Activated naive CD4-positive, alpha-beta T cell treated with anti-CD3 and anti-CD28 coated beads for 36 hours (primary cell): ENCODE measurements at regions of chr7 and their contacts with region 1.

Region 1: DNA sequence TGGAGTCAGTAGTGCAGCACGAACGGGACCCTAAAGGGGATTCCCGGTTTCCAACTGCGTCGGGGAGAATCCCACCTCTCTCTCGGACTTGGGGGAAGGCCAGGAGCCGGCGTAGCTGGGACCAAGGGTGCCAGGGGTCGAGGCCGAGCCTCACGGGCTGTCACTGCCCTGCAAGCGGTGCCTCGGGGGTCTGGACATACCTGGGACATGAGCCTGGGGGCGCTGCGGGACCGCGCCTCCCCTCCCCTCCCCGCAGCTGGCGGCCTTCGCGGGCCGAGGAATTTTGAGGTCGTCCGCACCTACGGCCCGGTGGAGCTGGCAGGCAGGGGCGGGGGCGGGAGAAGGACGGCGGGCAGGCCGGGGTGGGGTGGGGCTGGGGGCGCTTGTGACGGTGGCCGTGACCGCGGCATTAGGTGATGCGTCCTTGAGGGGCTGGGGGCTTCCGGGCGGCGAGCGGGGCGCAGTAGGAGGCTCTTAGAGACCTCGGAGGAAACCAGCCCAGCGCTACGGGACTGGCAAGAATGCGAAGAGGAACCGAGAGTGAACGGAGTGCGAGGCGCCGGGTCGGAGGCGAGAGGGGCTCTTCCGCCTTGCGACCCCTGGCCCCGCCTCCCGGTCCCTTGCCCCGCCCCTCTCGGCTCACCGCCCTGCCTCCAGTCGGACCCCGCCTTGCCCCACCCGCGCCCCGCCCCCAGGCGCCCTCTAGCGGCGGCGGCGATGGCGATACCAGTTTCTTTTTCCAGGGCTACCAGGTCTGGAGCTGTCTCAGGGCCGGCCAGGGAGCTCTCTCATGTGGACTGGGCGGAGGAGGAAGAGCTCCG is 48.3 kb downstream of the NPVF start:
- DNase-seq: peak; percentile 94
- H3K4me3 Mint-ChIP-seq: peak overlapping the region; percentile 83
- H3K27ac Mint-ChIP-seq: peak overlapping the region; percentile 81
- H3K4me1 Mint-ChIP-seq: peaks cover 19% of the 10 kb centered on the region
- H3K27me3 Mint-ChIP-seq: no peaks in the 10 kb centered on the region

Region 2: GRCh38 chr7:25148772-25149575 is 31.0 kb before region 1 on chr7:
- CTCF ChIA-PET with region 1: no interaction called
- intact Hi-C with region 1: loop called (anchors 2 kb)
- DNase-seq: no peak
- H3K4me3 Mint-ChIP-seq: no peak overlapping the region
- H3K27ac Mint-ChIP-seq: no peak overlapping the region
- H3K4me1 Mint-ChIP-seq: peaks cover 18% of the 10 kb centered on the region
- H3K27me3 Mint-ChIP-seq: no peaks in the 10 kb centered on the region

Region 3: DNA sequence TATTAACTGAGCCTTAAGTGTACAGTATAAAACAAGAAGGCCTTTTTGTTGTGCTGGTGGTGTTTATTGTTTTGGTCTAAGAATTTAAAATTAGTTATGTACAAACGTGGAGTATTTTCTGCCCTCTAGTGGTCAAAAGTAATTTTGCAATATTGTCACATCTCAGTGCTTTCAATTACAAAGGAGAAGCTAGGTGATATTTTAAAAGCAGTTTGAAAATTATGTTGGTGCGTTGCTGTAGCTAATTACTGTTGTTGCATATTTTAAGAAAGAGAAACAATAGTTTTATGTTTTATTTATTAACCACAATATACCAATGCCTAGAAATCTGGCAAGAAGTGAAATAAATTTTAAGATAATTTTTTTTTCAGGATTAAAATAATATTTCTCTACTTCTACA is 36.9 kb after region 1 on chr7:
- CTCF ChIA-PET with region 1: interaction called, 3 read pairs
- intact Hi-C with region 1: loop called (anchors 2 kb)
- DNase-seq: no peak
- H3K4me3 Mint-ChIP-seq: no peak overlapping the region
- H3K27ac Mint-ChIP-seq: no peak overlapping the region
- H3K4me1 Mint-ChIP-seq: no peaks in the 10 kb centered on the region
- H3K27me3 Mint-ChIP-seq: peaks cover 14% of the 10 kb centered on the region

Region 4: GRCh38 chr7:25520017-25520416 is 340.0 kb after region 1 on chr7:
- CTCF ChIA-PET with region 1: no interaction called
- intact Hi-C with region 1: loop called (anchors 1 kb)
- DNase-seq: peak; percentile 35
- H3K4me3 Mint-ChIP-seq: no peak overlapping the region
- H3K27ac Mint-ChIP-seq: peak overlapping the region; percentile 51
- H3K4me1 Mint-ChIP-seq: peaks cover 45% of the 10 kb centered on the region
- H3K27me3 Mint-ChIP-seq: no peaks in the 10 kb centered on the region

Region 5: GRCh38 chr7:25857376-25857921 is 677.5 kb after region 1 on chr7:
- CTCF ChIA-PET with region 1: no interaction called
- intact Hi-C with region 1: loop called (anchors 1 kb)
- DNase-seq: no peak
- H3K4me3 Mint-ChIP-seq: no peak overlapping the region
- H3K27ac Mint-ChIP-seq: no peak overlapping the region
- H3K4me1 Mint-ChIP-seq: peaks cover 31% of the 10 kb centered on the region
- H3K27me3 Mint-ChIP-seq: peaks cover 62% of the 10 kb centered on the region